GM10248 (cell line): ENCODE measurements at regions of chr10 and their contacts with region 1.

Region 1: GRCh38 chr10:114304017-114304570 is 65.0 kb downstream of the VWA2 start:
- DNase-seq: peak; percentile 84
- CTCF ChIP-seq: peak; percentile 91

Region 2: GRCh38 chr10:114077815-114078219 is 226.3 kb before region 1 on chr10:
- CTCF ChIA-PET with region 1: no interaction called
- POLR2A ChIA-PET with region 1: no interaction called
- DNase-seq: no peak
- CTCF ChIP-seq: no peak

Region 3: DNA sequence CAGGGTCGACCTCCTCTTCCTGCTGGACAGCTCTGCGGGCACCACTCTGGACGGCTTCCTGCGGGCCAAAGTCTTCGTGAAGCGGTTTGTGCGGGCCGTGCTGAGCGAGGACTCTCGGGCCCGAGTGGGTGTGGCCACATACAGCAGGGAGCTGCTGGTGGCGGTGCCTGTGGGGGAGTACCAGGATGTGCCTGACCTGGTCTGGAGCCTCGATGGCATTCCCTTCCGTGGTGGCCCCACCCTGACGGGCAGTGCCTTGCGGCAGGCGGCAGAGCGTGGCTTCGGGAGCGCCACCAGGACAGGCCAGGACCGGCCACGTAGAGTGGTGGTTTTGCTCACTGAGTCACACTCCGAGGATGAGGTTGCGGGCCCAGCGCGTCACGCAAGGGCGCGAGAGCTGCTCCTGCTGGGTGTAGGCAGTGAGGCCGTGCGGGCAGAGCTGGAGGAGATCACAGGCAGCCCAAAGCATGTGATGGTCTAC is 18.1 kb before region 1 on chr10:
- CTCF ChIA-PET with region 1: interaction called, 31 read pairs
- POLR2A ChIA-PET with region 1: no interaction called
- DNase-seq: no peak
- CTCF ChIP-seq: no peak

Region 4: DNA sequence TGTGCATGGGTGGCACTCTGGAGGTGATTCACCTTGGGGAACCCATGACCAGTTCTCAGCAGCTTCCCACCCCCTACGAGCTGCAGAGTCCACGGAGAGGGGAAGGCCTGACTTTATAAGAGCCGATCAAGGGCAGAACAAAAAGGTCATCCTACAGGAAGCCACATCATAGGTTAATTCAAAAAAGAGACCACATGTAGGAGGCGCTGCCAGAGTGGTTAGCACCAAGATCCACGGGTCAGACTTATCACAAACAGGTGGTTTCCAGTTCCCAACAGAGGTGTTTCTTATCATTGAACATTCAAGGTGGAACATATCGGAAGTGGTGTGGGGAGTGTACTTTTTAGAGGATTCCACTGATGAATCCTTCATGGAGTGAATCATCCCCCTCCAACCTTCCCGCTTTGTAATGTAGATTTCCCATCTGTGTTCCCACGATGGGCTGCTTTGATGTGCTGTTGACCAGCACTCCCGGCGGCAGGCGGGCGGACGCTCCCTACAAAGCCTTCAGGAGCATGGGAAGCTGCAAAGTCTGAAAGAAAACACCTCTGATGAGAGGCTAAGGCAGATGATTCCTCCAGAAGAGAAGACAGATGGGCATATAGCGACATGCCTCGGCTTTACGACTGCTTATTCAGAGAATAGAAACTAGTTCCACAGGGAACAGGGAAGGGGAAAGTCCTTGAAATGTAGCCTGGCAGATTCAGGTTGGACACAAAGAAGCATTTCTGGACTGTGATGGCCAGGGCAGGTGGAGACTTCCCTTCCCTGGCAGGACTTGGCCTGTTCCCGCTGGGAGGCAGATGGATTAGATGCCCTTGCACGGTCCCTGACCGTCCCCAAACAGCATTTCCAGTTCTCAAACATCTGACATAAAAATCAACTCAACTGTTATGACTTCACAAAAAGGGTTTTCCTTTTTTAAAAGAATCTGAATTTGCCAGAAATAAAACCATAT is 33.7 kb after region 1 on chr10:
- CTCF ChIA-PET with region 1: interaction called, 10 read pairs
- POLR2A ChIA-PET with region 1: no interaction called
- DNase-seq: peak; percentile 39
- CTCF ChIP-seq: no peak

Region 5: DNA sequence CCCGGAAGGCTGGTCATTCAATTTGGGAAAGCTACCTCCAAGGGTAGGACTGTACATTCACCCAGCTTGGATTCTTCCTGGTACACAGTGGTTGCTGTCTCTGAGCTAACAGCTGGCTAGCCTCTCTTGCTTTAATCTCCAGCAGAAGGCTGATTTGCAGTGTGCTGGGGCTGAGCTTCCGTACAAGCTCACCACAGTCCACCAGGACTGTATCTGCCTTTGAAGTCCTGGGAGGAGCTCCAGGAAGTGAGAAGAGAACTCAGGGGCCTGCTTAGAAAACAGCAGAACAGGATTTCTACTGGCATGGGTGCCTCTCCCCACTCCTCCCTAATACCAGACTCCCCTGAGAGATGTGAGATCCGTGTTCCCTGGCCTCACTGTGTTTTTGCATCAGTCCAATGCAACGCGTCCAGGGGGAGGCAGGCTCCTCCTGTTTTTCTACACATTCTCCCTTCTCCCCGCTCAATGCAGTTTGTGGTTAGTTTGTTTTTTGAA is 93.6 kb after region 1 on chr10:
- CTCF ChIA-PET with region 1: interaction called, 24 read pairs
- POLR2A ChIA-PET with region 1: no interaction called
- DNase-seq: no peak
- CTCF ChIP-seq: no peak

Region 6: GRCh38 chr10:114427124-114427852 is 123.2 kb after region 1 on chr10:
- CTCF ChIA-PET with region 1: interaction called, 20 read pairs
- POLR2A ChIA-PET with region 1: no interaction called
- DNase-seq: no peak
- CTCF ChIP-seq: no peak

Region 7: GRCh38 chr10:114458955-114459354 is 154.9 kb after region 1 on chr10:
- CTCF ChIA-PET with region 1: interaction called, 40 read pairs
- POLR2A ChIA-PET with region 1: no interaction called
- DNase-seq: peak; percentile 48
- CTCF ChIP-seq: peak; percentile 41

Region 8: GRCh38 chr10:114550756-114551635 is 246.9 kb after region 1 on chr10:
- CTCF ChIA-PET with region 1: interaction called, 15 read pairs
- POLR2A ChIA-PET with region 1: no interaction called
- DNase-seq: no peak
- CTCF ChIP-seq: peak; percentile 40